Activated CD4-positive, alpha-beta T cell treated with anti-CD3 and anti-CD28 coated beads for 36 hours (primary cell): ENCODE measurements at regions of chr12 and their contacts with region 1.

Region 1: DNA sequence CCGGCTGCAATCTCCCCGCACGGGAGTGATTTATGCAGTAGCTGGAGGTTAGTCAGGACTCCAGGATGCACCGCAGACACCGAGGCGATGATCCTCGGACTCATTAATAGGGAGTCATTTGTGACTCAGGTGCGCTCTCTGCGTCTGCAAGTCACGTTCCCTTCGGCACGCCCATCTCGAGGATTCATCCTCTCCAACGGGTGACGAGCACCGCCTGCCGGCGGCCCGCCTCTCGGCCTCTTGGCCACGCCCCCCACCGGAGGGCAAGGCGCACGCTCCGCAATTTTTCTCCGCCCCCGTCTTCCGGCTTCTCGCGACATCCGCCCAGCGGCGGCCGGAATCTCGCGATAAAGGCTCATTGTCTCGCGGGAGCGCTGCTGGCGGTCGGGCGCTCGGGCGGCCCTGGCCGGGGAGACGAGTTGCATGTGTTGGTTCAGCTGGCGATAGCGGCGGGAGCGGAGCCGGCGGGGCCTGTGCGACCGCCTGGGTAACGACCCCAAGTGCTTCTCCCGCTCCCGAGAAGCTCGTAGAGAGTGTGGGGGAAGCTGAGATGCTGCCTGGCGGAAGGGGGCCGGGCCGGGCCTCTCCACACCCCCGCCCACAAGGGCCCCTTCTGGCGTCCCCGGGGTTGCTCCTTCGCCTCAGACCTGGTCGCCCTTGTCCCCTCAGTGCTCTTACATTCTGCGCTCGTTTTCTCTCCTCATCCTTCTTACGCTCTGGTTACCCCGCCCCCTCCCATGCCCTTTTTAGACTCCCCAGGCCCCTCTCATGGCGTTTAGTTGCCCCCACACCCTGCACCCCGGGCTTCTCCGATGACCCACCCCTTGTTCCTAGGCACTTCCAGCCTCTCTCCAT is at the start of gene DENR:
- DNase-seq: peak; percentile 100
- ATAC-seq: peak; percentile 95
- H3K4me3 Mint-ChIP-seq: peak within 1 kb of the TSS; percentile 92
- H3K27ac Mint-ChIP-seq: peak within 1 kb of the TSS; percentile 96
- H3K4me1 Mint-ChIP-seq: peaks cover 53% of the 10 kb centered on the region
- H3K27me3 Mint-ChIP-seq: no peaks in the 10 kb centered on the region
- total RNA-seq, gene DENR: 64.1 to 76.9 TPM

Region 2: DNA sequence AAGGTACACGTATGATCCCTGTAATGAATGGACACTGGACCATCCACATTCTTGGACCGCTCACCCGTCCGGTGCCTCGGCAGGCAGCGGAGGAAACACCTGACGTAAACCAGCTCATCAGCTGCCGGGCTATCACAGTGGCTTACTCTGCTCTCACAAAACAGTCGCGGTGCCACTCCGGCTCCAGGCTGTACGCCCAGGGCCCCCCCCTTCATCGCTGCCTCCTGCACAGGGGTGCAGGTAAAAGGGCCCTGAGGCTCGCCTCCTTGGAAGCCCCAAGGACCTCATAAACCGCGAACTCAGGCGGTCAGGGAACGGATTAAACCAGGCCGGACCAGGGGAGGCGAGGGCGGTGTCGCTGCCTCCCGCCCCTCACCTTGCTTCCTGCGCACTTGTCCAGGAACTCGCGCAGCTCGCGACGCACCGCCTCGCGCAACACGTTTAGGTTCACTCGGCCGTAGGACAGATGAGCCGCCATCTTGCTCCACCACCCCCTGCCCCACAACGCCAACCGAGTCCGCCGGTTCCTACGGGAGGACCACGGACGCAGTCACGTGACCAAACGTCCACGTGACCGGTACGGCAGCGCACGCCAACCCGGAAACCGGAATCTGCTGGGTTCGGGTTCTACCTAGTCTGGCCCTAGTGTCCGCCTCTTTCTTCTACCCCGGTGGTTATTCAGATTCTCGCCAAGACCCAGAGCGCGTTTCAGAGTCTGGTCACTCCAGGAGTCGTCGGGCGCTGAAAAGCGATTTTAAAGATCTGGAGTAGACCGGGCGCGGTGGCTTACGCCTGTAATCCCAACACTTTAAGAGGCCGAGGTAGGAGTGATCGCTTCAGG is 486.5 kb before region 1 on chr12 and contains the start of gene VPS33A:
- CTCF ChIA-PET with region 1: no interaction called
- POLR2A ChIA-PET with region 1: no interaction called
- intact Hi-C with region 1: loop called in 1 of 2 experiments (anchors 2 kb)
- DNase-seq: peak; percentile 98
- ATAC-seq: peak; percentile 86
- H3K4me3 Mint-ChIP-seq: peak within 1 kb of the TSS; percentile 97
- H3K27ac Mint-ChIP-seq: peak within 1 kb of the TSS; percentile 98
- H3K4me1 Mint-ChIP-seq: peaks cover 23% of the 10 kb centered on the region
- H3K27me3 Mint-ChIP-seq: no peaks in the 10 kb centered on the region
- total RNA-seq, gene VPS33A: 24.8 to 26.4 TPM

Region 3: GRCh38 chr12:122421821-122422729 is 330.6 kb before region 1 on chr12 and contains the start of gene CLIP1:
- CTCF ChIA-PET with region 1: no interaction called
- POLR2A ChIA-PET with region 1: no interaction called
- intact Hi-C with region 1: loop called in 1 of 2 experiments (anchors 5 kb)
- DNase-seq: peak; percentile 77
- ATAC-seq: peak; percentile 74
- H3K4me3 Mint-ChIP-seq: peak within 1 kb of the TSS; percentile 91
- H3K27ac Mint-ChIP-seq: peak within 1 kb of the TSS; percentile 89
- H3K4me1 Mint-ChIP-seq: peaks cover 37% of the 10 kb centered on the region
- H3K27me3 Mint-ChIP-seq: no peaks in the 10 kb centered on the region
- total RNA-seq, gene CLIP1: 53.9 to 58.6 TPM

Region 4: DNA sequence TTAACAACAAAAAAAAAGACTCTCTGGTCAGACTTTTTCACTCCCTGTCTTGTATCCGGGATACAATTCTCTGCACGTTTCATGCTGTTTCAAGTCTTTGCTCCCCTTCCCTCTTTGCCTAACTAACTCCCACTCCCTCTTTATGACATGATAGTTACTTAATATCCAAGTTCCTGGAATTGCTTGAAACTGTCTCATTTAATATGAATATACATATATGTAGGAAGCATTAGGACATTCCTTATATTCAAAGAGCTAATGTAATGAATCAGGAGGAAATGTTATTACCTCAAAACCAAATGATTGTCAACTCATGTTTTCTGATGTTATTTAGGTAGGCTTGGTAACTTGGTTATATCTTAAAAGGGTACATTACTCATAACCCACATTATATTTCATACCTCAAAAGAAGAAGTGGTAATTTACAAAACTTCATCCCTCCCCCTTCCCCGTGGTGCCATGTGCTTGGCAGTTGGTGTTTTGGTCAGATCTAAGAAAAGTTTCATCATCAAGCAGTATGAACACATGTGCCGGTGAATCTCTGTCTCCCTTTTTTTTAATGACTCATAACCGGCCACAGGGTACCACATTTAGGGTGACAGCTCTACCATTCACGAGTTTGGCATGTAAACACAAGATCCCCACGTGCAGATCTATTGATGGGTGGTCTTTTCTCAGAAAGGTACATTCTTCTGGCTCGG is 106.0 kb before region 1 on chr12:
- CTCF ChIA-PET with region 1: interaction called, 3 read pairs
- POLR2A ChIA-PET with region 1: no interaction called
- intact Hi-C with region 1: loop called in 1 of 2 experiments (anchors 1 kb)
- DNase-seq: peak; percentile 81
- ATAC-seq: peak; percentile 97
- H3K4me3 Mint-ChIP-seq: peak overlapping the region; percentile 54
- H3K27ac Mint-ChIP-seq: peak overlapping the region; percentile 79
- H3K4me1 Mint-ChIP-seq: peaks cover 18% of the 10 kb centered on the region
- H3K27me3 Mint-ChIP-seq: peaks cover 2% of the 10 kb centered on the region

Region 5: DNA sequence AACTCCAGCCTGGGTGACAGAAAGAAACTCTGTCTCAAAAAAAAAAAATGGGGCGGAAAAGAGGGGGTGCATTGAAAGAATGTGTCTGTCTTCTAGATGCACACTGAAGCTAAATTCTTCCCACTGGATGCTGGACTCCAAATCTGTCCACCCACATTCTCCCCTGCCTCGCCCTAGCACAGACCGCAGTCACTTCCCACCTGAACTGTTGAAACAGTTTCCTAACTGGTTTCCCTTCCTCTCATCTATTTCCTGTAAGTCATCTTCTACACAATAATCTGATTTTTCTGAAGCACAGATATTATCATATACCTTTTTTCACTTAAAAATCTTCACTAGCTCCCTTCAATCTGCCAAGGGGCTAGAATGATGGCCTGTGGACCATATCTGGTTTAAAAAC is 20.5 kb before region 1 on chr12:
- CTCF ChIA-PET with region 1: no interaction called
- POLR2A ChIA-PET with region 1: interaction called, 5 read pairs
- intact Hi-C with region 1: loop called in 1 of 2 experiments (anchors 1 kb)
- DNase-seq: peak; percentile 63
- ATAC-seq: peak; percentile 20
- H3K4me3 Mint-ChIP-seq: no peak overlapping the region
- H3K27ac Mint-ChIP-seq: peak overlapping the region; percentile 83
- H3K4me1 Mint-ChIP-seq: peaks cover 64% of the 10 kb centered on the region
- H3K27me3 Mint-ChIP-seq: no peaks in the 10 kb centered on the region